Activated T-helper 2 cell treated with anti-CD3 and anti-CD28 coated beads, Interferon-gamma antibody, Interleukin-2, Interleukin-4, amounts not matched to agents 10 μg/mL and 5 μg/mL and 100 μg/mL, durations not matched to agents 14 hours and 24 hours and 36 hours (primary cell): ENCODE measurements at regions of chr21 and their contacts with region 1.

Region 1: GRCh38 chr21:34967509-34968289 is 81.4 kb downstream of the RUNX1 start:
- DNase-seq: peak; percentile 41
- H3K4me3 Mint-ChIP-seq: peak overlapping the region; percentile 69
- H3K27ac Mint-ChIP-seq: peak overlapping the region; percentile 99
- H3K4me1 Mint-ChIP-seq: peaks cover 82% of the 10 kb centered on the region
- H3K27me3 Mint-ChIP-seq: no peaks in the 10 kb centered on the region

Region 2: GRCh38 chr21:34874684-34875513 is 92.8 kb before region 1 on chr21:
- intact Hi-C with region 1: no loop called
- DNase-seq: no peak
- H3K4me3 Mint-ChIP-seq: no peak overlapping the region
- H3K27ac Mint-ChIP-seq: peak overlapping the region; percentile 67
- H3K4me1 Mint-ChIP-seq: peaks cover 48% of the 10 kb centered on the region
- H3K27me3 Mint-ChIP-seq: no peaks in the 10 kb centered on the region

Region 3: DNA sequence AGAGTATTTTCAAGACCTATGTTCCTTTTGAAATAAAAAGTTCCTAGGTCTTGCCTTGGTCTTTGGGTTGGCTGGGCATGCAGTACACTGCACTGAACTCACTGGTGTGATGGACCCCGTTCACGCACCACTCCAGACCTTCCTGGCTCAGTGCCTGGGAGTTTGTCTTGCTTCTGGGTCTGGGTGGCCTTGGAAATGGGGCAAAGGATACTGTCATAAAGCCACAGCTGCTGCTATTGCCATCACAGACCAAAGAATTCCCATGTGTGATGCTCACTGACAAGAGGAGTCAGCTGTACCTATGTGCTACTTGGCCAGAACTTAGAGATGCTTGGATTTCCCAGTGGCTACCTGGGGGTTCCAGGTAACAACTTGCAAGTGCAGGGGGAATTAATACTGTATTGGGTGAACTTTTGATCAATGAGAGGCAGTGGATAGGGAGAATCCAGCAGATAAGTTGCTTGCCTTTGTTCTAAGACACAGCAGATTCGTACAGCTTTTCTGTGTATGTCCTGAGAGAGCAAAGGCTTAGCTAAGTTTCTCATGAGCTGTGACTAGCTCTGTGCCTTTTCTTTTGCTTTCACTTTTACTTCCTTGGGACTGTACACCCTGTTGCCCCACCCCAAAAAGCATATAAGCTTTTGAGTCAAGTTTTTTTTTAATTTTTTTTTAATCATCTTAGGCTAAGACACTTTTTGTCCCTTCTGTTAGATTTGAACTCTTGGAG is 33.9 kb before region 1 on chr21:
- intact Hi-C with region 1: loop called (anchors 5 kb)
- DNase-seq: peak; percentile 37
- H3K4me3 Mint-ChIP-seq: peak overlapping the region; percentile 72
- H3K27ac Mint-ChIP-seq: peak overlapping the region; percentile 91
- H3K4me1 Mint-ChIP-seq: peaks cover 83% of the 10 kb centered on the region
- H3K27me3 Mint-ChIP-seq: no peaks in the 10 kb centered on the region

Region 4: DNA sequence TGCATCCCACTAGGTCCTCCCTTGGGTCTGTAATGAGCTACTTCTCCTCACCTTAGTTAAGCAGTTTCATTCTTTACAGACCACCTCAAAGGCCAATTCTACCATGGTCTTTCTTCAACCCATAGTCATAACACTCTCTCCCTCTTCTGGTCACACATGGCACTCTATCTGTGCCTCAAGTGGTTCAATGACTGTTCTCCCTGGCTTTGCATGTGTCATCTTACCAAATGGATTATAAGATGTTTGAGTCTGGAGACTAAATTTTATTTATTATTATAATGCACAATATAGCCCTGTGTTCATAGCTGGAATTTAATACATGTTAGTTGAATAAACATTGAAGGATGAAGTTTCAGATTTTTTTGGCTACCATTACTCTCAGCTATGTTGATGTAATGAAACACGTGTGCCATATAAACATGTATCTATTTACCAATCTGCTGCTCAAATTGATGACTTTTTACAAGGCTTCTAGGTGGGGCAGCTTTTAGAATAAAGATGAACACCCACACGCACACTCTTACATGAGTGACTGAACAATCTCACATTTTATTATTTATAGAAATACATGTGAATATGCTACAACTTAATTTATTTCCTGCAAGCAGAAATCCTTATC is 20.7 kb before region 1 on chr21:
- intact Hi-C with region 1: loop called (anchors 1 kb)
- DNase-seq: no peak
- H3K4me3 Mint-ChIP-seq: no peak overlapping the region
- H3K27ac Mint-ChIP-seq: peak overlapping the region; percentile 83
- H3K4me1 Mint-ChIP-seq: peaks cover 80% of the 10 kb centered on the region
- H3K27me3 Mint-ChIP-seq: no peaks in the 10 kb centered on the region

Region 5: GRCh38 chr21:34953950-34954349 is 13.7 kb before region 1 on chr21:
- intact Hi-C with region 1: loop called (anchors 1 kb)
- DNase-seq: no peak
- H3K4me3 Mint-ChIP-seq: no peak overlapping the region
- H3K27ac Mint-ChIP-seq: peak overlapping the region; percentile 83
- H3K4me1 Mint-ChIP-seq: peaks cover 70% of the 10 kb centered on the region
- H3K27me3 Mint-ChIP-seq: no peaks in the 10 kb centered on the region

Region 6: DNA sequence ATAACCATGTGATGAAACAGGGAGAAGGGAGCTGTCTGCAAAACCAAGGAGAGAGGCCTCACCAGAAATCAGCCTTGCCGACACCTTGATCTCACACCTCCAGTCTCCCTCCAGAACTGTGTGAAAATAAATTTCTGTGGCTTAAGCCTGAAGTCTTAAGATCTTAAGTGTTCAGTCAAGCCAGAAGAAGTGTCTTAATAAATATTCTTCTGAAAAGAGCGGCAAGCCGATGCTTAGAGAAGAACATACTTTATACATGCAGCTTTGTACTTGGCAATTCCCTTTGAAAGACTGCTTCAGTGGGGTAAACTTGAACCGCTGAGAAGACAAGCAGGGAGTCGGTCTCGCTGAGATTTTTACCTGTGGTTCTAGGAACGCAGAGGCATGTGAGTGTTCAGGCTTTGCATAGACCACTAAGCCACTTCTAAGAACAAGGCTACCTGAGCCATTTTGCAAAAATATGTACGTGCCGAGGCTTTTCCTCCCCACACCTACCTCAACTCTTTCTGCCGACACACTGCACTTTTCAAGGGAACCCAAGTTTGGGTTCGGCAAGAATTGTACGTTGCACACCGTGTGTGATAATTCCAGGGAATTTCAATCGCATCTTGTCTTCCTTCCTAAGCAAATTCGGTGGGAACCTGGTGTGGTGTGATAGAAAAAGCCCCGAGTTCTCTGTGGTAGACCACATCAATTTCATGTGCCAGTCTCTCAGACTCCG is 78.0 kb after region 1 on chr21:
- intact Hi-C with region 1: loop called (anchors 1 kb)
- DNase-seq: peak; percentile 46
- H3K4me3 Mint-ChIP-seq: peak overlapping the region; percentile 93
- H3K27ac Mint-ChIP-seq: peak overlapping the region; percentile 96
- H3K4me1 Mint-ChIP-seq: peaks cover 75% of the 10 kb centered on the region
- H3K27me3 Mint-ChIP-seq: no peaks in the 10 kb centered on the region

Region 7: GRCh38 chr21:35057428-35057827 is 89.7 kb after region 1 on chr21:
- intact Hi-C with region 1: no loop called
- DNase-seq: no peak
- H3K4me3 Mint-ChIP-seq: peak overlapping the region; percentile 63
- H3K27ac Mint-ChIP-seq: peak overlapping the region; percentile 70
- H3K4me1 Mint-ChIP-seq: peaks cover 61% of the 10 kb centered on the region
- H3K27me3 Mint-ChIP-seq: no peaks in the 10 kb centered on the region